ENCODE measurements at regions of chr17 and their contacts with region 1.

Region 1: GRCh38 chr17:4420692-4421131 is 13.0 kb upstream of the SPNS3 start:
- DNase-seq: peak; percentile 50
- H3K4me3 ChIP-seq: no peak overlapping the region
- H3K27ac ChIP-seq: no peak overlapping the region
- H3K4me1 ChIP-seq: no peaks in the 10 kb centered on the region
- H3K27me3 ChIP-seq: no peaks in the 10 kb centered on the region
- CTCF ChIP-seq: peak; percentile 86 to 88

Region 2: DNA sequence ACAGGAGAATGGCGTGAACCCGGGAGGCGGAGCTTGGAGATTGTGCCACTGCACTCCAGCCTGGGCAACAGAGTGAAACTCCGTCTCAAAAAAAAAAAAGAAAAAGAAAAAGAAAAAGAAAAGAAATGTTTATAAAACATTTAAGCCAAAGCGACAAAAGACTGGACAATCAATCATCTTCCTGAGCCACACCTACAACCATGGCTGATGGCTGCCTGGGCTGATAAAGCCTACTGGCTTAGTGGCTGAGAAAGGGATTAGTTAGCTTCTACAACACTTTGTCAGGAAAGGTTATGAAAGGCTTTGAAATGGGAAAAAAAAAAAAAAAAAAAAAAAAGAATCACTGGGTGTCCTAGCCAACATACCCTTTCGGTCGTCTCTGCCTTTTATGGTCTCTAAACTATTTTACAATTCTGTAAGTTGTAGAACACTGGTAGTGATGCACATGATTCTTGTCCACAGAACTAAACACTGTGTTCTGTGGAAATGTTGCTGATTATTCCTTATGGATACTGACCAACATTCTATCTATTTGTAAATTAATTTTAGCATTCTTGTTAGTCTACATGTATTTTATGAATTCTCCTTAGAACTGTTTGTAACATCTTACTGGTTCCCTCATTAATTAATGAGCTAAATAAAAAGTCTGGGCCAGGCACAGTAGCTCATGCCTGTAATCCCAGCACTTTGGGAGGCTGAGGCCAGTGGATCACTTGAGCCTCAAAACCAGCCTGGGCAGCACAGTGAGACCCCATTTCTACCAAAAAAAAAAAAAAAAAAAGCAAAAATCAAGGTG is 323.3 kb before region 1 on chr17:
- CTCF ChIA-PET with region 1: interaction called, 5 read pairs
- dilution Hi-C with region 1: loop called (anchors 5 kb)
- in situ Hi-C with region 1: no loop called
- intact Hi-C with region 1: no loop called
- DNase-seq: no peak
- H3K4me3 ChIP-seq: no peak overlapping the region
- H3K27ac ChIP-seq: no peak overlapping the region
- H3K4me1 ChIP-seq: no peaks in the 10 kb centered on the region
- H3K27me3 ChIP-seq: no peaks in the 10 kb centered on the region
- CTCF ChIP-seq: no peak

Region 3: DNA sequence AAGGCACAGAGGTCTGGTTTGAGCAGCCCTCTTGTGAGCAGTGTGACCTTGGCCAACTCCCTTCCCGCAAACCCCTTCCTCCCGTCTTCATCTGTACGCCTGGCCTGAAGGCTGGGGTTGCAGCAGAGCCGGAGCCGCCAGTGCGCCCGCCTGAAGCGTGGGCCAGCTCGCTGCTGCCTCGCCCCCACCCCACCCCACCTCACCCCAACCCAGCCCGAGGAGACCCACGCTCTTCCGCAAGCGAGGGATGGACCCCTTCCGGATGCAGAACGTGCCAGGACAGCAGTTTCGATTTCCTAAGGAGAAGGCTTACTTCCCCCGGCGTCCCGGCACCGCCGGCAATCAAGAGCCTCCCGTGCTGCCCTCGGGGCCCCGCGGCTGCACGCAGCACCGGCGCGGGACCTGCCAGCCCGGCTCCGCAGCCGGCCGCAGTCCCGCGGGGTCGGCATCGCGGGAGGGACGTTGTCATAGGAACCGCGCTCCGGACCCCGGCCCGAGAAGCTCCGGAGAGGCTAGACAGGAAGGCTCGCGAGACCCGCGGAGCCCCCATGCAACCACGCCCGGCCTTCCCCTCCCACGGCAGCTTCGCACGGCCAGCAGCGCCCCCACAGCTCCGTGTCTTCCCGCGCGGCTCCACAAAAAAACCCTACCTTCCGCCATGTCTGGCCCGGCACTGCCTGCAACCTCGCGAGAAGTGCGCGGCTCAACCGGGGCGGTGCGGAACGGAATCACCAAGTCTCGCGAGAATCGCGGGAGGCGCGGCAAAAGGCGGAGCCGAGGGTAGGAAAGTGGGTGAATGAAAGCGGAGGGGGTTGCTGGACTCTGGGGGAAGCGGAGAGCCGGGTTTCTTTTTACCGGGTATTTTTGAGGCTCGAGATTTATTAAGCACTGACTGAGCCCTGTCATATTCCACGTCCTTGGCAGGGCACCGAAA is 157.2 kb before region 1 on chr17 and contains the start of gene ANKFY1:
- CTCF ChIA-PET with region 1: no interaction called
- dilution Hi-C with region 1: loop called (anchors 5 kb)
- in situ Hi-C with region 1: no loop called
- intact Hi-C with region 1: no loop called
- DNase-seq: peak; percentile 90
- H3K4me3 ChIP-seq: peak within 1 kb of the TSS; percentile 71 to 97 (median 86)
- H3K27ac ChIP-seq: peak within 1 kb of the TSS; percentile 79
- H3K4me1 ChIP-seq: peaks cover 22% of the 10 kb centered on the region
- H3K27me3 ChIP-seq: no peaks in the 10 kb centered on the region
- CTCF ChIP-seq: peak in 1 of 2 donors; percentile 24
- total RNA-seq, gene ANKFY1: 45.4 to 46.2 TPM

Region 4: GRCh38 chr17:4375039-4375748 is 45.5 kb before region 1 on chr17:
- CTCF ChIA-PET with region 1: no interaction called
- dilution Hi-C with region 1: loop called (anchors 5 kb)
- in situ Hi-C with region 1: no loop called
- intact Hi-C with region 1: no loop called
- DNase-seq: no peak
- H3K4me3 ChIP-seq: no peak overlapping the region
- H3K27ac ChIP-seq: no peak overlapping the region
- H3K4me1 ChIP-seq: no peaks in the 10 kb centered on the region
- H3K27me3 ChIP-seq: no peaks in the 10 kb centered on the region
- CTCF ChIP-seq: no peak

Region 5: GRCh38 chr17:4407851-4408250 is 12.9 kb before region 1 on chr17:
- CTCF ChIA-PET with region 1: no interaction called
- dilution Hi-C with region 1: no loop called
- in situ Hi-C with region 1: no loop called
- intact Hi-C with region 1: no loop called
- DNase-seq: no peak
- H3K4me3 ChIP-seq: no peak overlapping the region
- H3K27ac ChIP-seq: no peak overlapping the region
- H3K4me1 ChIP-seq: peaks cover 2% of the 10 kb centered on the region
- H3K27me3 ChIP-seq: no peaks in the 10 kb centered on the region
- CTCF ChIP-seq: no peak

Region 6: GRCh38 chr17:4519361-4519788 is 98.7 kb after region 1 on chr17:
- CTCF ChIA-PET with region 1: no interaction called
- dilution Hi-C with region 1: loop called (anchors 5 kb)
- in situ Hi-C with region 1: no loop called
- intact Hi-C with region 1: no loop called
- DNase-seq: no peak
- H3K4me3 ChIP-seq: no peak overlapping the region
- H3K27ac ChIP-seq: no peak overlapping the region
- H3K4me1 ChIP-seq: peaks cover 31% of the 10 kb centered on the region
- H3K27me3 ChIP-seq: no peaks in the 10 kb centered on the region
- CTCF ChIP-seq: no peak

Region 7: GRCh38 chr17:4554997-4555799 is 134.5 kb after region 1 on chr17 and contains the start of gene MYBBP1A:
- CTCF ChIA-PET with region 1: no interaction called
- dilution Hi-C with region 1: no loop called
- in situ Hi-C with region 1: no loop called
- intact Hi-C with region 1: loop called (anchors 2 kb)
- DNase-seq: peak; percentile 92
- H3K4me3 ChIP-seq: peak within 1 kb of the TSS; percentile 78 to 100 (median 91)
- H3K27ac ChIP-seq: peak within 1 kb of the TSS; percentile 67
- H3K4me1 ChIP-seq: peaks cover 48% of the 10 kb centered on the region
- H3K27me3 ChIP-seq: no peaks in the 10 kb centered on the region
- CTCF ChIP-seq: no peak
- total RNA-seq, gene MYBBP1A: 63.2 to 105 TPM

Region 8: GRCh38 chr17:4625181-4625617 is 204.5 kb after region 1 on chr17:
- CTCF ChIA-PET with region 1: no interaction called
- dilution Hi-C with region 1: no loop called
- in situ Hi-C with region 1: loop called (anchors 10 kb)
- intact Hi-C with region 1: loop called (anchors 1 kb)
- DNase-seq: no peak
- H3K4me3 ChIP-seq: no peak overlapping the region
- H3K27ac ChIP-seq: no peak overlapping the region
- H3K4me1 ChIP-seq: no peaks in the 10 kb centered on the region
- H3K27me3 ChIP-seq: no peaks in the 10 kb centered on the region
- CTCF ChIP-seq: no peak